Common myeloid progenitor, CD34-positive (primary cell): ENCODE measurements at regions of chr15 and their contacts with region 1.

Region 1: DNA sequence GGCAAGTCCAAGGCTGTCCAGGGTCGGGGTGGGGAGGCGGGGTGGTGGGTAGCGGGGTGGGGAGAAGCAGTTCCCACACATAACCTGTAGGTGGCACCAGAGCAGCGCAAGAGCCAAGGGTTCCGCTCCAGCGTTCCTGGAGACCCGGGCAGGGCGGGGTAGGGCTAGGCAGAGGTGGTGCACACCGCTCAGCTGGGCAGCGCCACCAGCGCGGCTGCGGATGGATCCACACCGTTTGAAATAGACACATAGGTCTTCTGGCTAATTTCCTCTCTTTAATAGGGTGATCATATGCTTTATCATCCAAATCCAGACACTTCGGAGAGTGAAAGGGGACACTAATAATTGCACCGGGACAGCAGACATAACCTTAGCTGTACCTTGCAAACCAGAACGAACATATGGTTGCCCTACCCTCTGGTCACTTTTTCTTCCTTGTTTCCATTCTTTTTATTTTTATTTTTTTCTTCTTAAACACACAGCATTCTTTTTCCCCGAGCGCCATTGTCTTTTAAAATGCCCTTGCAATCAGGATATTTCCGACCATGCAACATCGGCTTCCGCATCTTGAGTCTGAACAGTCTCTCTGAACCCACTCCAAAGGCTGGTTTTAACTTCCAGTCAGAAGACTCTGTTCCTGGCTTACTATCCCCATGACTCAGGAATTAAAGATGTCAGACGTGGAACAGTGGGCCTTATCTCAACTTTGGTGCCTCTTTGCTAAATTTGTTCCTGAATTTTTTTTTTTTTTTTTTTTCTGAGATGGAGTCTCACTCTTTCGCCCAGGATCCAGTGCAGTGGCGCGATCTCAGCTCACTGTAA is 12.5 kb upstream of the ZSCAN2 start:
- DNase-seq: peak; percentile 82 to 91 (median 90)
- H3K4me3 ChIP-seq: peak overlapping the region in 6 of 7 experiments; percentile 49 to 80 (median 60)
- H3K27ac ChIP-seq: no peak overlapping the region
- H3K4me1 ChIP-seq: peaks cover 0 to 6% (median 2%) of the 10 kb centered on the region in 4 experiments
- H3K27me3 ChIP-seq: no peaks in the 10 kb centered on the region

Region 2: DNA sequence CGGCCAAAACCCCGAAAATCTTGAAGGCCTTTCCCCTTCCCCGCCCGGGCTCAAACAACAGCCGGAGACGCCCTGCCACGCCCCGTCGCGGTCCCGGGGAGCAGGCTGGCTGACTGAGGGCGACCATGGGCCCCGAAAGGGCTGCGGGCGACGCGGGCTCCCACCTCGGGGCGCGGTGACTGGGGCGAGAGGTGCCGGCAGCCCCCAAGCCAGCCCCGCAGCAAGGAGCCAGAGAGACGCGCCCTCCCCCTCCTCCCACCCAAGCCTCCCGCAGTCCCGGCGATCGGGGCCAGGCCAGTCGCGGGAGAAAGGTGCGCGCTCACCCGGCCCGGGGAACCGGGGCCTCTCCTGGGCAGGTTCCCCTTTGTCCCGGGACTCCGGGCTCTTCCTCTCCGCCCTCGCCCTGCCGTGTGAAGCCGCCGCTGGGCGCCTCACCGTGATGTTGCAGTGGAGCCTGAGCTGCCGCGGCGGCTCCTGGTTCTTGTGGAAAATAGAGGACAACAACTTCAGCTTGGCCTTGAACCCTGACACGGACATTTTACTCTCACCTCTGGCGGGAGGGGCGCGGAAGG is 18.0 kb before region 1 on chr15:
- CTCF ChIA-PET with region 1: interaction called, 18 read pairs
- POLR2A ChIA-PET with region 1: no interaction called
- DNase-seq: peak; percentile 43 to 70 (median 57)
- H3K4me3 ChIP-seq: peak overlapping the region; percentile 74 to 89 (median 79)
- H3K27ac ChIP-seq: peak overlapping the region; percentile 58 to 81
- H3K4me1 ChIP-seq: peaks cover 2 to 9% (median 6%) of the 10 kb centered on the region in 4 experiments
- H3K27me3 ChIP-seq: no peaks in the 10 kb centered on the region

Region 3: DNA sequence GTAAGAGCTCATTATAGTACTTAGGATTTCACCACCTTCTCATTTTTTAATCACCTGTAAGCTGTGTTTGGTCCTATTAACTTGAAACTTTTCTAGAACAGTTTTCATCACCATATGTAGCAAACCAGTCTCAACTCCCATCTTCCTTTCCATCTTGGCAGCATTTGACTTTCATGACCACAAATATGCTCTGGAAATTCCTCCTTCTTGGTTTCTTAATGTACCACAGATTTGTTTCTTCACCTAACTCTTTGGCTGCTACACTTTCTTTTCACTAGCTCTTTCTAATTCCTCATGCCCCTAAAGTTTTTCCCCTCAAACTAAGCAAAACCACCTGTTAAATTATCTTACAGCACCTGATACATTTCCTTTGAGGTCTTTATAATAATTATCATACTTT is 82.9 kb after region 1 on chr15:
- CTCF ChIA-PET with region 1: no interaction called
- POLR2A ChIA-PET with region 1: no interaction called
- DNase-seq: no peak
- H3K4me3 ChIP-seq: no peak overlapping the region
- H3K27ac ChIP-seq: no peak overlapping the region
- H3K4me1 ChIP-seq: no peaks in the 10 kb centered on the region
- H3K27me3 ChIP-seq: no peaks in the 10 kb centered on the region

Region 4: GRCh38 chr15:84879088-84879792 is 291.0 kb after region 1 on chr15:
- CTCF ChIA-PET with region 1: interaction called, 14 read pairs
- POLR2A ChIA-PET with region 1: no interaction called
- DNase-seq: no peak
- H3K4me3 ChIP-seq: no peak overlapping the region
- H3K27ac ChIP-seq: no peak overlapping the region
- H3K4me1 ChIP-seq: no peaks in the 10 kb centered on the region
- H3K27me3 ChIP-seq: peaks cover 0 to 3% (median 0%) of the 10 kb centered on the region in 5 experiments